ENCODE measurements at regions of chr4 and their contacts with region 1.

Region 1: DNA sequence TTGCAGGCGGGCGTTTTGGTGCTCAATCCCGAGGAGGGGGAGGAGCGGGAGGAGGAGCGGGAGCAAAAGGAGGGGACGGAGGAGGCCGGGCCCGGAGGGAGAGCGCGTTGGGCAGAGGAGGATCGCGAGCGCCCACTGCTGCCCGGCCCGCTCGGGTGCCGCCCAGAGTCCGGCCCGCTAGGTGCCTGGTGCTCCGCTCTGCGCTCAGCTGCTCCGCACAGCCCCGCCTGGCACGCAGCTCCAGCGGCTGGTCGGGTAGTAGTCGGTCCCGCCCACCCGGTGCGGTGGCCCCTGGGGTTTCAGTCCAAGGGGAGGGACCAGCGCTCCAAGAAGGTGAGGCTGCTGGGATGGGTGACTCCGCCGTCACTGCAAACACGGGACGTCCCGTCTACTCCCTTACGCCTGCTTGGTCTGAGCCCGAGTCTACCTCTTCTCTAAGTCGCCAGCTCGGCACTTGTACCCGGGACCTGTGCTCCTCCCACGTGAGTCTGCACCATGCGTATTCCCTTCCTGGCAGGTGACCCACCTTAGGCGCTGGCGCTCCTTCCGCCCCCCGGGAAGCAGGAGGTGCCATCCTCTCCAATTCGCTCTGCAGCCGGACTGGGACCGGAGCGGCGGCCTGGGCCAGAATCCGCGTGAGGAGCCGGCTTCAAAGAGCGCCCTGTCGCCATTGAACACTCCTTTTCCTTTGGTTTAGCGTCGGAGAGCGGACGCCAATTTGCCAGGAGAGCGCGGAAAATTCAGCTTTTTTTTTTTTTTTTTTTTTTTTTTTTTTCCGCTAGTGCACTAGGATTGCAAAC is 405 bp upstream of the HS3ST1 start:
- DNase-seq: peak; percentile 75
- H3K4me3 ChIP-seq: peak overlapping the region; percentile 56 to 75 (median 72)
- H3K27ac ChIP-seq: no peak overlapping the region
- H3K4me1 ChIP-seq: peaks cover 23% of the 10 kb centered on the region
- H3K27me3 ChIP-seq: peaks cover 10 to 13% of the 10 kb centered on the region in 2 experiments
- CTCF ChIP-seq: peak; percentile 65 to 89
- POLR2A ChIP-seq: no peak

Region 2: GRCh38 chr4:10998831-10999230 is 430.3 kb before region 1 on chr4:
- CTCF ChIA-PET with region 1: no interaction called
- POLR2A ChIA-PET with region 1: no interaction called
- dilution Hi-C with region 1: no loop called
- intact Hi-C with region 1: no loop called
- DNase-seq: no peak
- H3K4me3 ChIP-seq: no peak overlapping the region
- H3K27ac ChIP-seq: no peak overlapping the region
- H3K4me1 ChIP-seq: no peaks in the 10 kb centered on the region
- H3K27me3 ChIP-seq: no peaks in the 10 kb centered on the region
- CTCF ChIP-seq: no peak
- POLR2A ChIP-seq: no peak

Region 3: GRCh38 chr4:11446155-11446811 is 17.2 kb after region 1 on chr4:
- CTCF ChIA-PET with region 1: interaction called, 18 read pairs
- POLR2A ChIA-PET with region 1: no interaction called
- dilution Hi-C with region 1: no loop called
- intact Hi-C with region 1: no loop called
- DNase-seq: peak; percentile 65
- H3K4me3 ChIP-seq: no peak overlapping the region
- H3K27ac ChIP-seq: no peak overlapping the region
- H3K4me1 ChIP-seq: no peaks in the 10 kb centered on the region
- H3K27me3 ChIP-seq: no peaks in the 10 kb centered on the region
- CTCF ChIP-seq: no peak
- POLR2A ChIP-seq: no peak

Region 4: DNA sequence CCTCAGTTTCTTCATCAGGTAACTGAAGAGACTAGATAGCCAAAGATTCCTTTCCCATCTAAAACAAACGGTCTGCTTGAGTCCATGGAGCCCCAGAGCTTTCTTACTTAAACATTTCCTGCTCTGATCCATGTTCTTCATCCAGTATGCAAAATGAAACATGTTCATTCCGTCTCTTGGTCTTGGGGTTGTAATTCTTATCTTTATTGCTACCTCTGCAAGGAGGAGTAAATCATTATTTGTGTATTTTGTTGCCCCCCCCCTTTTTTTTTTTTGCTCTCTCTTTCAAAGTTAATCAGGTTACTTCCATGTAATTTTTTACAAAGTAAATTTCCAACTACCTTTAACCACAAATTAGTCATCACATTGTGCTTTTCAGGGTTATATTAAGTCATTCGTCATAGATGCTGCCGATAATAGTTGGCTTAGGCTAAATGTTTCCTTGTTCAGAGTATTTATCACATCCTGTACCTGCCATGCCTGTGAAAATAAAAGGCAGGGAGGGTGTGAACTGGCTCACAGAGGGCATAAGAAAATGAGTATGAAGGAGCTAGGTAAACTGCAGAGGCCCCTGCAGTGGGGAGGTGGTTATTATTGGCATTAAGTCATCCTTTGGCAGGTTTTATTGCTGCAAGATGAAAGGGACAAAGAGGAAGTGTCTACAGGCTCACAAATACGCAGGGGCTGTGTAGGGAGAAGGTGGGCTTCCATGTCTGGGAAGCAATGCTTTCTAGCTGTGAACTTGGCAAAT is 76.3 kb after region 1 on chr4:
- CTCF ChIA-PET with region 1: interaction called, 10 read pairs
- POLR2A ChIA-PET with region 1: no interaction called
- dilution Hi-C with region 1: no loop called
- intact Hi-C with region 1: no loop called
- DNase-seq: peak; percentile 96
- H3K4me3 ChIP-seq: no peak overlapping the region
- H3K27ac ChIP-seq: peak overlapping the region; percentile 54
- H3K4me1 ChIP-seq: peaks cover 17% of the 10 kb centered on the region
- H3K27me3 ChIP-seq: no peaks in the 10 kb centered on the region
- CTCF ChIP-seq: no peak
- POLR2A ChIP-seq: no peak

Region 5: GRCh38 chr4:11623726-11624037 is 194.6 kb after region 1 on chr4:
- CTCF ChIA-PET with region 1: interaction called, 12 read pairs
- POLR2A ChIA-PET with region 1: no interaction called
- dilution Hi-C with region 1: no loop called
- intact Hi-C with region 1: loop called (anchors 2 kb)
- DNase-seq: peak; percentile 45
- H3K4me3 ChIP-seq: no peak overlapping the region
- H3K27ac ChIP-seq: no peak overlapping the region
- H3K4me1 ChIP-seq: peaks cover 10% of the 10 kb centered on the region
- H3K27me3 ChIP-seq: no peaks in the 10 kb centered on the region
- CTCF ChIP-seq: peak; percentile 11 to 48
- POLR2A ChIP-seq: no peak

Region 6: DNA sequence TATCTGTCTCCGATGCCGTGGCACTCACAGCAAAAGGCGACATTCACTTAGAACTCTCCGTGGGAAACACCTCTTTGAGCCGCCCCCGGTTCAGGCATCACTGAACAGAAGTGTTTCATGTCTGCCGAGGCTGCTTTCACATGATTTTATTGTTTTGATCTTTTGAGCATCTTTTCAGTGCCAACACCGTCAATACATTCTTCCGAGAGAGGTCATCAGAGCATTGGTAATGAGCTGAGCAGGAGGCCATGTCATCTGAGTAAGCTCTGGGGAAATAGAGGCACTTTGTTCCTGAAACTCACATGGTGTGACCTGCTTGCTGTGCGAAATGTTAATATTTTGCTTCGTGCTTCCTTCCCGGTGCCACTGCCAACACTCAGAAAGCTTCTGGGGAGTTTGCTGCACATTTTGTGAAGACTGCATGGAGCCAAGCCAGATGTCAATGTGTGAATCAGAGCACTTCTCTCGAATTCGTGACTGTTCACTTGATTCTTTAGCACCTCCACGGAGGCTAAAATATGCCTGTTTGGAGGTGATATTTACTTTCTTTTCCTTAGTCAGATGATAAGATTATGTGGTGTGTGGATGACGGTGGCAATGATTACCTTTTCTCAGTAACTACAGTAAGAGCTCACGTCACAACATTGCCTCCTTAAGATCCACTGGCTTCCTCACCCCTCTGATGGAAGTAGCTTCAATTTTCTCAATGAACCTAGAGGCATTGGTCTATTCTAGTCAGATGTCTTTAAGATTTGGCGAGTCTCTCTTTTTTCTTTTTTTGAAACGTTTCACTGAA is 221.9 kb after region 1 on chr4:
- CTCF ChIA-PET with region 1: no interaction called
- POLR2A ChIA-PET with region 1: no interaction called
- dilution Hi-C with region 1: no loop called
- intact Hi-C with region 1: no loop called
- DNase-seq: no peak
- H3K4me3 ChIP-seq: no peak overlapping the region
- H3K27ac ChIP-seq: no peak overlapping the region
- H3K4me1 ChIP-seq: no peaks in the 10 kb centered on the region
- H3K27me3 ChIP-seq: no peaks in the 10 kb centered on the region
- CTCF ChIP-seq: no peak
- POLR2A ChIP-seq: no peak

Region 7: GRCh38 chr4:11691236-11691635 is 262.1 kb after region 1 on chr4:
- CTCF ChIA-PET with region 1: interaction called, 3 read pairs
- POLR2A ChIA-PET with region 1: no interaction called
- dilution Hi-C with region 1: no loop called
- intact Hi-C with region 1: loop called (anchors 2 kb)
- DNase-seq: peak; percentile 61
- H3K4me3 ChIP-seq: no peak overlapping the region
- H3K27ac ChIP-seq: peak overlapping the region; percentile 55
- H3K4me1 ChIP-seq: peaks cover 22% of the 10 kb centered on the region
- H3K27me3 ChIP-seq: no peaks in the 10 kb centered on the region
- CTCF ChIP-seq: no peak
- POLR2A ChIP-seq: no peak

Measured in endothelial cell of umbilical vein (primary cell).